GM12878 (cell line): ENCODE measurements at regions of chr12 and their contacts with region 1.

Region 1: DNA sequence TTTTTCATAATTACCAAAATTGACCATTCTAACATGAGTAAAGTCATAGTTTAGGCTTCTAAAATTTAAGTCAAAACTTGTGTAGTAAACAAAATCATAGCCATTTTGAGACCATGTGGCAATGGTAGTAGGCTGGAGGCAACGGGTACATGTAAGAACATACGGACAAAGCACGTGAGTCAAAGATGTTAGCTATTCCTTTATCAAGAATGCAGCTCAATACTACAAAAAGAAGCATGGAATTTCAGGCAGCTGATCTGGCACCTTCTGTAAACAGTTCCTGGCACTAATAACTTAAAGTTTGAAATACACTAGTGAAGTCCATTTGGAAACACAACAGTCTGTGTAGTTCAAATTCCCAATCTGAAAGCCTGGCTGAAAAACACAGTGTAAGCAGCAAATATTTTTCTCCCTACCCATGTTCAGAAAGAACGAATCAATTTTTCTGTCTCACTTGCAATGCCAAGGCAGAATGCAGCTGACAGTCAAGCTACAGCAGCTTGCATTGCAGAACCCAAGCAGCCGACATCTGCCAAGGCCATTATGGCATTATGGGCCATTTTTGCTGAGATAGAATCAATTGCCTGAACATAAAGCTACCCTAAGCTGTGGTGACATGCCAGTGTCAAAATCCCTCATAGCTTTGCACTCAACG is 29.3 kb downstream of the MYF5 start:
- DNase-seq: no peak
- ATAC-seq: no peak
- H3K4me3 ChIP-seq: no peak overlapping the region
- H3K27ac ChIP-seq: no peak overlapping the region
- H3K4me1 ChIP-seq: no peaks in the 10 kb centered on the region
- H3K27me3 ChIP-seq: no peaks in the 10 kb centered on the region
- CTCF ChIP-seq: no peak
- EP300 ChIP-seq: no peak
- POLR2A ChIP-seq: no peak
- RAD21 ChIP-seq: no peak

Region 2: GRCh38 chr12:79634957-79635471 is 1111.0 kb before region 1 on chr12:
- CTCF ChIA-PET with region 1: no interaction called
- POLR2A ChIA-PET with region 1: no interaction called
- RAD21 ChIA-PET with region 1: no interaction called
- SMC1A ChIA-PET with region 1: no interaction called
- in situ Hi-C with region 1: no loop called
- intact Hi-C with region 1: no loop called
- DNase-seq: no peak
- ATAC-seq: peak; percentile 54
- H3K4me3 ChIP-seq: no peak overlapping the region
- H3K27ac ChIP-seq: no peak overlapping the region
- H3K4me1 ChIP-seq: no peaks in the 10 kb centered on the region
- H3K27me3 ChIP-seq: no peaks in the 10 kb centered on the region
- CTCF ChIP-seq: no peak
- EP300 ChIP-seq: no peak
- POLR2A ChIP-seq: no peak
- RAD21 ChIP-seq: no peak

Region 3: DNA sequence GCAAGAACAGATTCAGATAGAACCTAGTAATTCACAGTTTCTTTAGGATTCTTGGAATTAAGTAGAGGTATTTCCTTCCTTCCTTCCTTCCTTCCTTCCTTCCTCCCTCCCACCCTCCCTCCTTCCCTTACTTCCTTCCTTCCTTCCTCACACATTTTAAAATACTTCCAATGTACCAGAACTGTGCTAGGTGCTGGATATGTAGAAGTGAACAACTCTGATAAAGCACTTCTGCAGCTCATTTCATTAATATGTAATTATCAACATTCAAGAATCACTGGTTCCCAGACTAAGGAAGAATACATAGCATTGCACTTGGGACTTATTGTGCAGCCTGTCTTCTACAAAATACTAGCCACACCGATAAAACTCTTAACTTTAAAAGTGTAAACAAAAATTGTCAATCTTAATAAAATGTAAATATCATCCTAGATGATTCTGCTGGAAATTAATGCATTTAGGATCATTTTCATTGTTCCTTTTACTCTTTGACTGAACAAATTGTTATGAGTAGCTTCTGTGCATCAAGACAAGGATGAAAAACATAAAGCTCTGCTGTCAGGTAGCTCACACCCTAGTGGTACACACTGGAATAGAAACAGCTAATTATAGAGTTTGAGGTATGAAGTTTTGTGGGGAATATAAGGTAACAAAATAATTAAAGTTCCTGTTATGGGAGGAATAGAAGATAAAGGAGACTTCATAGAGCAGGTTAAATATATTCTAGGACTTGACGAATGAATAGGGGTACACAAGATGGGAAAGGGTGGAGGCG is 138.4 kb before region 1 on chr12:
- CTCF ChIA-PET with region 1: no interaction called
- POLR2A ChIA-PET with region 1: no interaction called
- RAD21 ChIA-PET with region 1: no interaction called
- SMC1A ChIA-PET with region 1: no interaction called
- in situ Hi-C with region 1: no loop called
- intact Hi-C with region 1: loop called (anchors 5 kb)
- DNase-seq: no peak
- ATAC-seq: no peak
- H3K4me3 ChIP-seq: no peak overlapping the region
- H3K27ac ChIP-seq: no peak overlapping the region
- H3K4me1 ChIP-seq: no peaks in the 10 kb centered on the region
- H3K27me3 ChIP-seq: no peaks in the 10 kb centered on the region
- CTCF ChIP-seq: peak in 1 of 3 experiments; percentile 27; a peak in 1 of 6 replicates
- EP300 ChIP-seq: no peak
- POLR2A ChIP-seq: no peak
- RAD21 ChIP-seq: no peak